HEK293 (cell line): ENCODE measurements at regions of chr1 and their contacts with region 1.

Region 1: DNA sequence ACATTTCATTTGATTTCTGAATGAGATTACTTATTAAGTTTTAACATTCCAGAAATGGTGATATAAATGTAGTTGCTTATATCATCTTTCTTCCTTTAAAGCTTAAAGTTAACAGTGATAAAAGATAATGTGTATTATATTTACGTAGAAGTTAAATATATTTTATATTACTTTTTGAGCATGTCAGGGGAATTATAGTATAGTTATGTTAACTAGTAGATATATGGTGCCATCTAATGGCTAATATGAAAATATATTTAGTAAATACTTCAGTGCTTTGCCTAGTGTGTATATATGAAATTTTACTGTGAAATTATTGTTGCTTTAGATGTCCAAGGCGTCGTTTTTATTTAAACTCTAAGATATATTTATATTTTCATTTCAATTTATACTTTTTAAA is 51.5 kb downstream of the SYT14 start:
- H3K4me3 ChIP-seq: no peak overlapping the region
- H3K27ac ChIP-seq: no peak overlapping the region
- H3K4me1 ChIP-seq: no peaks in the 10 kb centered on the region
- CTCF ChIP-seq: no peak

Region 2: DNA sequence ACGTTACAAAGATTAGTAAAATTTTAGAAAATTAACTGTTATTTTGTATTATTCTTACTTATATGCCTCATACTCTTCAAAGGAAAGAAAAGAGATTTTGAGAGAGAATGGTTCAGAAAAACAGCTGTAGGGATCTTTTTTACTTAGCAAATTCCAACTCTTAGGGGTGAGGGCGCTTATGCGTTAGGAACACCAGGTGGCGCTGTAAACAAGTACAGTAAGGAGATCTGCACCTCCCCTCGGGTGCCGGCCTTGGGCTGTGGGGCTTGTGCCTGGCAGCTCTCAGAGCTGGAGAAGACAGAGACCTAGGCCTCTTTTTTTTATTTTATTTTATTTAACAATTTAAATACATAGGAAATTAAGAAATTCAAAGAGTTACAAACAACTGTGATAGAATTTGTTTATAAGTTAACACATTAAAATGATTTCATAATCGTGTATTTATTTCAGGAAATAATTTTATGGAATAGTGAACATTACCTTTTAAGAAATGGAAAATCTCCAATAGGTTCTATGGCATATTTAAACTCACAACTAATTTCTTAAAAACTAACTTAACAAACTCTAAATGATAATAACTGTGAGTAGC is 129.1 kb before region 1 on chr1:
- CTCF ChIA-PET with region 1: interaction called, 84 read pairs
- POLR2A ChIA-PET with region 1: no interaction called
- H3K4me3 ChIP-seq: no peak overlapping the region
- H3K27ac ChIP-seq: no peak overlapping the region
- H3K4me1 ChIP-seq: peaks cover 7% of the 10 kb centered on the region; the same call in 1 of the 2 replicates
- CTCF ChIP-seq: peak; percentile 40

Region 3: GRCh38 chr1:209875515-209875914 is 114.0 kb before region 1 on chr1:
- CTCF ChIA-PET with region 1: interaction called, 13 read pairs
- POLR2A ChIA-PET with region 1: no interaction called
- H3K4me3 ChIP-seq: no peak overlapping the region
- H3K27ac ChIP-seq: no peak overlapping the region
- H3K4me1 ChIP-seq: no peaks in the 10 kb centered on the region; the same call in 1 of the 2 replicates
- CTCF ChIP-seq: peak; percentile 59

Region 4: DNA sequence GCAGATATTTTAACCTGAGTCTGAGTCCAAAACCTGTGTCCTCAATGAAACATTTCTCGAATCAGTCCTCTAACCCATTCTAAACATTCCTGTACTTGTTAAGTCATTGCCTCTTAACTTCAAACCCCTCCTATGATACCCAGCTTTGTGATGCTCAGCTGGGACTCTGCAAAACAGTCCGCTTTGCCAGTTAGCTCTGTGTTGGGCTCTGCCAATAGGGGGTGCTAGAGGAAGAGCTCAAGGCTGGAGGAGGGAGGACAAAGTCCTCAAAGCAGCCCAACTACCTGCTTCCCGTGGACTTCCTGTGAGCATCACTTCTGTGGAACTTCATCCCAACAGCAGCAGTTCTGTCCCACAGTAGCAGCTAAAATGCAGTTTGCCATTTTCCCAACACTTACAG is 89.6 kb before region 1 on chr1:
- CTCF ChIA-PET with region 1: interaction called, 10 read pairs
- POLR2A ChIA-PET with region 1: no interaction called
- H3K4me3 ChIP-seq: no peak overlapping the region
- H3K27ac ChIP-seq: no peak overlapping the region
- H3K4me1 ChIP-seq: no peaks in the 10 kb centered on the region
- CTCF ChIP-seq: no peak